Activated T-helper 2 cell treated with anti-CD3 and anti-CD28 coated beads, Interferon-gamma antibody, Interleukin-2, Interleukin-4, amounts not matched to agents 10 μg/mL and 5 μg/mL and 100 μg/mL, durations not matched to agents 14 hours and 24 hours and 36 hours (primary cell): ENCODE measurements at regions of chr14 and their contacts with region 1.

Region 1: GRCh38 chr14:91228112-91229004 is 16.1 kb downstream of the GPR68 start:
- DNase-seq: peak; percentile 76
- H3K4me3 Mint-ChIP-seq: peak overlapping the region; percentile 75
- H3K27ac Mint-ChIP-seq: peak overlapping the region; percentile 100
- H3K4me1 Mint-ChIP-seq: peaks cover 80% of the 10 kb centered on the region
- H3K27me3 Mint-ChIP-seq: no peaks in the 10 kb centered on the region

Region 2: DNA sequence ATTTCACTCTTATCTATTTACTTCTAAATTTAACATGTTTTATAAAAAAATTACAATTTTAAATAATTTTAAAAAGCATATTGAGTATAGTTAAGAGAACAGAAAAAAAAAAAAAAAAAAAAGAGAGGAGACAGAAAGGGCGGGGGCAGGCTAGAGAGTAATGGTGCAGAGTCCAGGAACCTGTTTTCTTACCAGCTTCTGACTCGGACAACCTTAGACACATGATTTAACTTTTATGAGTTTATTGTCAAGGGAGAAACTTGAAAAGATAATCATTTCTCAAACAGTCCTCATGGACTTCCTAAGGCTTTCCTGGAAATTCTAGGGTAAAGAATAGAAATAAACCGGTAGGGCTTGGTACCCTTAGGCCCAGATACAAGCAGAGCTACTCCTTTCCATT is 252.3 kb before region 1 on chr14:
- intact Hi-C with region 1: no loop called
- DNase-seq: no peak
- H3K4me3 Mint-ChIP-seq: no peak overlapping the region
- H3K27ac Mint-ChIP-seq: no peak overlapping the region
- H3K4me1 Mint-ChIP-seq: peaks cover 8% of the 10 kb centered on the region
- H3K27me3 Mint-ChIP-seq: no peaks in the 10 kb centered on the region

Region 3: DNA sequence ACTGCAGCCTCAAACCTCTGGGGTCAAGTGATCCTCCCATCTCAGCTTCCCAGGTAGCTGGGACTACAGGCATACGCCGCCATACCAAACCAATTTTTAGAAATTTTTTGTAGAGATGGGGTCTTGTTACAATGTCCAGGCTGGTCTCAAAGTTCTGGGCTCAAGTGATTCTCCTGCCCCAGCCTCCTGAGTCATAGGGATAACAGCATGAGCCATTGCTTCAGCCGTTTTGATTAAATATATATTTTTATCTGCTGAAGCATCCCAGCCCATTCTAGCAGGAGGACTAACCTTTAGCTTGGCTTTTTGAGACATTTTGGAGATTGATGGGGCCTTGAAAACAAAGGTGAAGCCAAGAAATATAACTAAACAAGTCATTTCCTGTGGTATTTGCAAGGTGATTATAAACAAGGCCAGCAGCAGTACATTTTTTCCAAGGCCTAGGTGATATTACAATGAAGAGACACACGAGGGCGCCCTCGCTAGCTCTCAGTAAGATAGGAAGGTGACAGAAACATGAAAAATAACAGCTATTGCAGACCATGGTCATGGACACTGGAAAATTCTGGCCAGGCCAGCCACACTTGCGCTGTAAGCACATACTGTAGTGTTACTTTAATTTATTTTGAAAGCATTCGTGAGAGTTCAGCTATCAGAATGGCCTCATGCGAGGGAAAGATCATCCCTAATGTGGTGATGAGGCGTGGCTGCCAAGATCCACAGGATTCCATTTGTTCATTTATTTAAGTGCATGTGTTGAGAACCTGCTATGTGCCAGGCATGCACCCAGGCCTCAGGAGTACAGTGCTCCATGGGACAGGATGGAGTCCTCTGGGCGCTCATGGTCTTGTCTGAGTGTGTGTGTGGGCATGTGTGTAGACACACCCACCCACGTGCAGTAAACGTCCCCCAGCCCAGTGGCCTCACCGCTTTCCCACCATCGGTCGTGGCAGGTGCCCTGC is 51.0 kb before region 1 on chr14:
- intact Hi-C with region 1: loop called (anchors 5 kb)
- DNase-seq: peak; percentile 69
- H3K4me3 Mint-ChIP-seq: no peak overlapping the region
- H3K27ac Mint-ChIP-seq: peak overlapping the region; percentile 86
- H3K4me1 Mint-ChIP-seq: peaks cover 17% of the 10 kb centered on the region
- H3K27me3 Mint-ChIP-seq: no peaks in the 10 kb centered on the region

Region 4: DNA sequence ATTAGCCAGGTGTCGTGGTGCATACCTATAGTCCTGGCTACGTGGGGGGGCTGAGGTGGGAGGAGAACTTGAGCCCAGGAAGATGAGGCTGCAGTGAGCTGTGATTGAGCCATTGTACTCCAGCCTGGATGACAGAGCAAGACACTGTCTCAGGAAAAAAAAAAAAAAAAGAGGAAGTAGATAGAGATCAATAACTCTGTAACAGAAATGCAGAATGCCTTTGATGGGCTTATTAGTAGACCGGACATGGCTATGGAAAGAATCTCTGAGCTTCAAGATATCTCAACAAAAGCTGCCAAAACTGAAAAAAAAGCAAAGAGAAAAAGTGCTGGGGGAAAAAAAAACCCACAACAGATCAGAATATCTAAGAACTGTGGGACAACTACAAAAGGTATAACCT is 21.4 kb before region 1 on chr14:
- intact Hi-C with region 1: loop called (anchors 2 kb)
- DNase-seq: no peak
- H3K4me3 Mint-ChIP-seq: peak overlapping the region; percentile 37
- H3K27ac Mint-ChIP-seq: peak overlapping the region; percentile 79
- H3K4me1 Mint-ChIP-seq: peaks cover 32% of the 10 kb centered on the region
- H3K27me3 Mint-ChIP-seq: no peaks in the 10 kb centered on the region

Region 5: DNA sequence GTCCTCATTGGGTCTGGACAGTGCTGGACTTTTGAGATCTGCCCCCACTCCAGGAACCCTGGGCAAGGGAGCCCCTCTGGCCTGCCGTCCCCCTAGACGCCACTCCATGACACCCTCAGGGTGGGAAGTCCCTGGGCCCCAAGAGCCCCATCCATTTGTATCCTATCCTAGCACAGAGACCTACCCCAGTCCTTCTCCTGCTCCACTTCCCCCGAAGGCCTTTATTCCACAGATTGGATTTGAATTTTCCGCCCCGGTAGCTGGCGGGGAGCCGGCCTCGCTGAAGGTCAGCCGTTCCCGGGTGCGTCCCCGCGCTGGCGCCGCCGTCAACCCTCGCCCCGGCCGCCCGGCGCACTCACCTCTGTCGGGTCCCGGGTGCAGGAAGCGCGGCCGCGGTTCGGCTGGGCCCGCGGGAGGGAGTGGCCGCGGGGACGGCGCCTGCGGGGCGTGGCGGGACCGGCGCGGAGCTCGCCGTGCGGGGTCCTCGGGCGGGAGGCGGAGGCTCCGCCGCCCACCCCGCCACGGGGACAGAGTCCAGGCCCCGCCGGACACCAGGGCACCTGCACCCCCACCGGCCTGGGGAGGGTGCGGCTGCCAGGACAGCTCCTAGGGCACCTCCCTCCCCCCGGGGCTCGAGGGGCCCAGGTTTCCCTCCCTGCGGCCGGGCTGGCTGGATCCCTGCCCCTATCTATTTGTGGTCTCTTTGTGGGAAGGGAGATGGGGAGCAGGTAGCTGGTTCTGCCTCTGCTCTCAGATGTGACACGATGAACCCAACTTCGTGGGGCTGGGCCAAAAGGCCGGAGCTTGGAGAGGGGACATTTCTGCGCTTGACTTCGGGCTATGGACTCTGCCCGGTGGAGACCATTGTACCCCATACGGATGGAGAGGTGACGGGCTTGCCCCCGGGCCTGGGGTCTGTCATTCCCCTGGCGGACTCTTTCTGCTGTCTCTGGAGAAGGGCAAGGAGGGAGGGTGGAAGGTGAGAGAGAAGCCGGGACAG is 36.1 kb after region 1 on chr14:
- intact Hi-C with region 1: loop called (anchors 5 kb)
- DNase-seq: no peak
- H3K4me3 Mint-ChIP-seq: peak overlapping the region; percentile 47
- H3K27ac Mint-ChIP-seq: no peak overlapping the region
- H3K4me1 Mint-ChIP-seq: peaks cover 36% of the 10 kb centered on the region
- H3K27me3 Mint-ChIP-seq: no peaks in the 10 kb centered on the region

Region 6: GRCh38 chr14:91317381-91318308 is 89.3 kb after region 1 on chr14:
- intact Hi-C with region 1: loop called (anchors 5 kb)
- DNase-seq: peak; percentile 69
- H3K4me3 Mint-ChIP-seq: peak overlapping the region; percentile 54
- H3K27ac Mint-ChIP-seq: peak overlapping the region; percentile 98
- H3K4me1 Mint-ChIP-seq: peaks cover 55% of the 10 kb centered on the region
- H3K27me3 Mint-ChIP-seq: no peaks in the 10 kb centered on the region